ENCODE measurements at regions of chr1 and their contacts with region 1.

Region 1: DNA sequence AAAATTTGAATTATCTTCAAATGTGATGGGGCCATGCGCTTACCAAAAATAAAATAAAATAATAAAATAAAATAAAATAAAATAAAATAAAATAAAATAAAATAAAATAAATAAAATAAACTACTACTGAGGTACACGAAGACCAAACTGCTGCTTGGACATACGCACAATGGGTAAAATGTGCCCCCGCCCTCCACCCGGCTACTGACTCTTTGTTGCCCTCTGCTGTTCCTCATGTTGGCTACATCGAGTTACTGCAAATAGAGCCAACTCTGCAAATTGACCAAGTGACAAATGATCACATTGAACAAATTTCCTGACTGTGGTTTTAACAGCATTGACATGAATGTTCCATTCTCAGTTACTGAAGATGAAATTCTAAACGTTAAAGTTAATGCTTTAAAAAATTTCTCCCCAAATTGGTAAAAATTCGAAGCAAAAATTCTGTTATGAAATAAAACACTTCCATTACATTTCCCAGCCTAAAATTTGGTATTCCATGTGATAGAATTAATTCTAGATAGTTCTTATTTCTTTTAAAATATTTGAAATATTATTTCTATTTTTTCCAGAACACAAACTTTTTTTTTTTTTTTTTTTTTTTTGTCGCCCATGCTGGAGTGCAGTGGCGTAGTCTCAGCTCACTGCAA is 18.8 kb upstream of the MAP1LC3C start:
- DNase-seq: peak; percentile 86
- H3K4me3 Mint-ChIP-seq: no peak overlapping the region
- H3K27ac Mint-ChIP-seq: no peak overlapping the region
- H3K4me1 Mint-ChIP-seq: peaks cover 7% of the 10 kb centered on the region
- H3K27me3 Mint-ChIP-seq: no peaks in the 10 kb centered on the region
- CTCF ChIP-seq: peak; percentile 88

Region 2: DNA sequence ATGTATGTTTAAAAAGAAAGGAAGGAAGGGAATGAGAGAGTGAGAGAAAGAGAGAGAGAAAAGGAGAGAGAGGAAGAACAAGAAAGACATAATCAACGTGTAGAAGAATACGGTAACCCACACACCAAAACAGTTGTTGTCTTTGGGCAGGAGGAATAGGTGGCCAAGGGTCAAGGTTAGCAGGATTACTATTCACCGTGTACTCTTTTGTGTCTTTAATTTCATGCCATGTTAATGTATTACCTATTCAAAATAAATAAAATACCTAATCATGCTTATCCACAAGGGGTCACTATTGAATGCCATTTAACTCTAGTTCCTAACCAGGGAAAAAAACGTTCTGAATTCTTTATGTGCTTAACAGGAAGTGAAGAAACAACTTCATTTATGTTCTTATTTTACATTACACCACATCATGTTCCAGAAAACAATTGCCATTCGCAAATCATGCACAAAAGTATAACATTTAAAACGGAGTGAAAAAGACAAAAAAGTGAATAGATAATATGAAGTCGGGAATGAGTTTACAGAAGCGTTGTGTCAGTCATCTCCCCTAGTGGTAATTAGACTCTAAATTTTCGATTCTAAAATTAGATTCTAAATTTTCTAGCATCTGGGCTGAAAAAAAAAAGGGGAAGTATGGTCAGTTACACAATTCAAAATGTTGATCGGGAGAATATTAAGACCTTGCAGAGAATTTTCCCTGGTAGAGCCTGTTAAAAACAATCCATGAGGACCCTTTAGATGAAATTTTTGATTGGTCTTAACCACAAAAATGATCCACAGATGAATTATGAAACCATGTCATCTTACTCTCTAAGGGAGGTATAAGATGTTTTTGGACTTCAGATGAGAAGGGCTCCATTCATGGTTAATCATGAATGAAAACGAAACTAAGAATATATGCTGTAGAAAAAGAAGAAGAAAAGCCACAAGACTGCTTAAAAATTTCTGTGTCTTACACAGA is 486.2 kb before region 1 on chr1:
- CTCF ChIA-PET with region 1: interaction called, 3 read pairs
- POLR2A ChIA-PET with region 1: no interaction called
- intact Hi-C with region 1: loop called (anchors 2 kb)
- DNase-seq: peak; percentile 91
- H3K4me3 Mint-ChIP-seq: peak overlapping the region; percentile 74
- H3K27ac Mint-ChIP-seq: peak overlapping the region; percentile 80
- H3K4me1 Mint-ChIP-seq: peaks cover 21% of the 10 kb centered on the region
- H3K27me3 Mint-ChIP-seq: no peaks in the 10 kb centered on the region
- CTCF ChIP-seq: peak; percentile 77

Region 3: GRCh38 chr1:241998412-241998921 is 19.2 kb before region 1 on chr1:
- CTCF ChIA-PET with region 1: interaction called, 44 read pairs
- POLR2A ChIA-PET with region 1: no interaction called
- intact Hi-C with region 1: no loop called
- DNase-seq: peak; percentile 93
- H3K4me3 Mint-ChIP-seq: peak overlapping the region; percentile 62
- H3K27ac Mint-ChIP-seq: no peak overlapping the region
- H3K4me1 Mint-ChIP-seq: peaks cover 7% of the 10 kb centered on the region
- H3K27me3 Mint-ChIP-seq: no peaks in the 10 kb centered on the region
- CTCF ChIP-seq: peak; percentile 89

Region 4: DNA sequence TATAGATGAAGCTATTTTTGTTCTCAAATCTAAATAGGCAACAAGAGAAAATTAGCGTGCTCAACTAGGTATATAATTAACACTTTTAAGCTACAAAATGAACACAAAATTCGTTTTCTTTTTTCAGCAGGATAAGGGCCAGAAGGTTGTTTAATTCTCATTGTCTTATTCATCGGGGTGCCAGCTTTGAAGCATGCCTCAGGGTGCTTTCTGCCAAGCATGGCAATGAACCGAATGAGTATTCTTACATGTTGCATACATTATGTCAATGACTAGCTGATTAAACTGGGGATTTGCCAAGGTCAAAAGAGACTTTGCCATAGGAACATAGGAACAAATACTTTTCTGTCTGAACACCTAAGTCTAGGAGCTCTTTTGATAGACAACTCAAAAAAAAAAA is 83.2 kb after region 1 on chr1:
- CTCF ChIA-PET with region 1: interaction called, 10 read pairs
- POLR2A ChIA-PET with region 1: no interaction called
- intact Hi-C with region 1: no loop called
- DNase-seq: peak; percentile 32
- H3K4me3 Mint-ChIP-seq: no peak overlapping the region
- H3K27ac Mint-ChIP-seq: no peak overlapping the region
- H3K4me1 Mint-ChIP-seq: no peaks in the 10 kb centered on the region
- H3K27me3 Mint-ChIP-seq: no peaks in the 10 kb centered on the region
- CTCF ChIP-seq: no peak

Region 5: GRCh38 chr1:242454262-242455045 is 436.7 kb after region 1 on chr1:
- CTCF ChIA-PET with region 1: interaction called, 103 read pairs
- POLR2A ChIA-PET with region 1: no interaction called
- intact Hi-C with region 1: loop called (anchors 1 kb)
- DNase-seq: peak; percentile 77
- H3K4me3 Mint-ChIP-seq: no peak overlapping the region
- H3K27ac Mint-ChIP-seq: no peak overlapping the region
- H3K4me1 Mint-ChIP-seq: peaks cover 7% of the 10 kb centered on the region
- H3K27me3 Mint-ChIP-seq: no peaks in the 10 kb centered on the region
- CTCF ChIP-seq: peak; percentile 93

Region 6: GRCh38 chr1:242523719-242524570 is 506.2 kb after region 1 on chr1:
- CTCF ChIA-PET with region 1: no interaction called
- POLR2A ChIA-PET with region 1: no interaction called
- intact Hi-C with region 1: loop called (anchors 10 kb)
- DNase-seq: peak; percentile 74
- H3K4me3 Mint-ChIP-seq: peak overlapping the region; percentile 79
- H3K27ac Mint-ChIP-seq: no peak overlapping the region
- H3K4me1 Mint-ChIP-seq: peaks cover 26% of the 10 kb centered on the region
- H3K27me3 Mint-ChIP-seq: no peaks in the 10 kb centered on the region
- CTCF ChIP-seq: peak; percentile 41

Region 7: DNA sequence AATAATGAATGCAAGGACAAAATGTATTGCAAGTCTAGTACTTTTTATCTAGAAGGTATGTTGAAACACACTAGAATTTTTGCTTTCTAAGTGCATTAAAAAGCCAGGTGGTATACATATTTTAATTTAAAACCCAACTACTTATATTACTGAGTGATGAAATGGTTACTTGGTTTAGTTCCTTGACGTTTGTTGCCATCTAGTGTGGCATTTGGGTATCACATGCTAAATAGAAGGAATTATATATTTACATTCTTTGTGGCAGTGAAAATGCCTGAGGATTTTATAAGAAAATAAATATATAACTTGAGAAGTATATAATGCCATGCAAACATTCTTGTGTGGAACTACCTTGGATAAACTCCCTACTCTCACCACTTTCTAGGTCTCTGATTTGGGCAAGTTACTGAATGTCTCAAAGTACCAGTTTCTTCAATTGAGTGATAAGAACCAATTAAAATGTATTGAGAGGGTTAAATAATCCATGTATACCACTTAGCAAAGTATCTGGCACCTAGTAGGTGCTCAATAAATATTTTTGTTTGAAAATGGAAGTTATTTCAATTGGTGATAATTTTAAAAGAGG is 1307.7 kb after region 1 on chr1:
- CTCF ChIA-PET with region 1: interaction called, 4 read pairs
- POLR2A ChIA-PET with region 1: no interaction called
- intact Hi-C with region 1: loop called (anchors 2 kb)
- DNase-seq: peak; percentile 82
- H3K4me3 Mint-ChIP-seq: no peak overlapping the region
- H3K27ac Mint-ChIP-seq: no peak overlapping the region
- H3K4me1 Mint-ChIP-seq: no peaks in the 10 kb centered on the region
- H3K27me3 Mint-ChIP-seq: no peaks in the 10 kb centered on the region
- CTCF ChIP-seq: peak; percentile 97